ENCODE measurements at regions of chr18 and their contacts with region 1.

Region 1: GRCh38 chr18:23377669-23378301 is 75.3 kb upstream of the RIOK3 start:
- ATAC-seq: peak in 4 of 8 experiments; percentile 25 to 82 (median 70)
- H3K4me3 ChIP-seq: no peak overlapping the region
- H3K27ac ChIP-seq: no peak overlapping the region
- H3K4me1 ChIP-seq: no peaks in the 10 kb centered on the region

Region 2: GRCh38 chr18:23032030-23032582 is 345.7 kb before region 1 on chr18:
- in situ Hi-C with region 1: loop called in 1 of 9 experiments (anchors 25 kb)
- ATAC-seq: no peak
- H3K4me3 ChIP-seq: no peak overlapping the region
- H3K27ac ChIP-seq: no peak overlapping the region
- H3K4me1 ChIP-seq: peaks cover 0 to 4% of the 10 kb centered on the region in 2 donors

Measured in motor neuron (in vitro differentiated cells).